Activated T-helper 2 cell treated with anti-CD3 and anti-CD28 coated beads, Interferon-gamma antibody, Interleukin-2, Interleukin-4, amounts not matched to agents 10 μg/mL and 5 μg/mL and 100 μg/mL, durations not matched to agents 14 hours and 24 hours and 36 hours (primary cell): ENCODE measurements at regions of chr12 and their contacts with region 1.

Region 1: GRCh38 chr12:107884769-107885694 is 110.5 kb downstream of the ASCL4 start:
- DNase-seq: peak; percentile 22
- H3K4me3 Mint-ChIP-seq: no peak overlapping the region
- H3K27ac Mint-ChIP-seq: no peak overlapping the region
- H3K4me1 Mint-ChIP-seq: peaks cover 2% of the 10 kb centered on the region
- H3K27me3 Mint-ChIP-seq: peaks cover 17% of the 10 kb centered on the region

Region 2: GRCh38 chr12:107670999-107671643 is 213.9 kb before region 1 on chr12:
- intact Hi-C with region 1: loop called (anchors 1 kb)
- DNase-seq: peak; percentile 25
- H3K4me3 Mint-ChIP-seq: no peak overlapping the region
- H3K27ac Mint-ChIP-seq: no peak overlapping the region
- H3K4me1 Mint-ChIP-seq: peaks cover 3% of the 10 kb centered on the region
- H3K27me3 Mint-ChIP-seq: peaks cover 15% of the 10 kb centered on the region

Region 3: DNA sequence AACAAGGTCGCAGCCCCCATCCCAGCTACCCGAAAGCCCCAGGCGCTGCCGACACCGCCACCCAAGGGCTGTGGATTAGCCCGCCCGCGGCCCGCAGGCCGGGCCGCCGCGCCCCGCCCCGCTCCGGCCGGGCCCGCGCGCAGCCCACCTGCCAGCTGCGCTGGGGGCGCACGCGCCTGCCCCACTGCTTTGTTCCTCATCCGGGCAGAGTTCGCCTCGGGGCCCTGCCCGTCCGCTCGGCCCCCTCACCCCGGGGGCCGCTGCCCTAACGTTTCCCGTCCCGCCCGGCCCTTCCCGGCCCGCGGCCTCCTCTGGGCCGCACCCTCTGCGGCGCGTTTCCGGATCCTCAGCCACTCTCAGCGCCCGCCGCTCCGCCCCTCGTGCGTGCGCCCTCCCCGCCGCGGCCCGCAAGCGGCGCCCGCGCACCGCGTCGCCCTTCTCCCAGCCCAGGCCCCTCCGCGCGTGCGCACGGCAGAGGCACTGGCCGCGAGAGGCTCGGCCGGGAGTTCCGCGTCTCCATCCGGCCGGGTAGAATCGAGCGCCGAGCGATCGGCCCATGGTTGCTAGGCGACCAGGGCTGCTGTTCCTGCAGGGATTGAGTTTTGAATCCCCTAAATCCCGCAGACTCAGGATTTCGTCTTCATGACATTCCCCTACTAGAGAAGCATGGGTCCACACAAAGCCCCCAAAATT is 124.1 kb before region 1 on chr12 and contains the start of gene PRDM4:
- intact Hi-C with region 1: loop called (anchors 2 kb)
- DNase-seq: peak; percentile 91
- H3K4me3 Mint-ChIP-seq: peak within 1 kb of the TSS; percentile 91
- H3K27ac Mint-ChIP-seq: peak within 1 kb of the TSS; percentile 82
- H3K4me1 Mint-ChIP-seq: peaks cover 27% of the 10 kb centered on the region
- H3K27me3 Mint-ChIP-seq: peaks cover 3% of the 10 kb centered on the region
- total RNA-seq, gene PRDM4: 30.5 and 34.4 TPM in 2 replicates